CD8-positive, alpha-beta memory T cell (primary cell): ENCODE measurements at regions of chr14 and their contacts with region 1.

Region 1: GRCh38 chr14:62626416-62626815 is 418.8 kb downstream of the KCNH5 start:
- DNase-seq: no peak
- H3K4me3 ChIP-seq: no peak overlapping the region
- H3K4me3 Mint-ChIP-seq: no peak overlapping the region
- H3K27ac ChIP-seq: no peak overlapping the region
- H3K27ac Mint-ChIP-seq: no peak overlapping the region
- H3K4me1 ChIP-seq: no peaks in the 10 kb centered on the region
- H3K4me1 Mint-ChIP-seq: no peaks in the 10 kb centered on the region
- H3K27me3 ChIP-seq: no peaks in the 10 kb centered on the region
- H3K27me3 Mint-ChIP-seq: no peaks in the 10 kb centered on the region

Region 2: DNA sequence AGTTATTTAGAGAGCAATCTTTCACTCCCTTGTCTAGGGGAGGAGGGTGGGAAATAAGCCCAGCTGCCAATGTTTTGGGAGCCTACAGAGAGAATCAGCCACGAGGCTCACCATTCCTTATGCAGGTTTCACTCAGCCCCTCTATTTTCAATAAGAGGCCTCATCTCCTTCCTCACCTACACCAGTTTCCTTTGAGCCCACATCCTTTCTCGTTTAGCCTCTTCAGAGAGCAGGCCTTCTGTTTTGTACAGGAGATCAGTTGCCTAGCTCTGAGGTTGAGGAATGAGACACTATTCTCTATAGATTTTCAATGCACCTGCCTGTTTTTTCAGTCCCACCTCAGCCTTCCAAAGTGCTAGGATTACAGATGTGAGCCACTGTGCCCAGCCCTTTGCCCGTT is 846.3 kb before region 1 on chr14:
- CTCF ChIA-PET with region 1: no interaction called
- POLR2A ChIA-PET with region 1: interaction called, 10 read pairs
- DNase-seq: peak in 2 of 5 donors; percentile 5 to 45
- H3K4me3 ChIP-seq: no peak overlapping the region
- H3K4me3 Mint-ChIP-seq: peak overlapping the region in 4 of 7 donors; percentile 4 to 54 (median 26)
- H3K27ac ChIP-seq: no peak overlapping the region
- H3K27ac Mint-ChIP-seq: peak overlapping the region in 5 of 8 donors; percentile 32 to 88 (median 70)
- H3K4me1 ChIP-seq: peaks cover 23% of the 10 kb centered on the region
- H3K4me1 Mint-ChIP-seq: peaks cover 15 to 20% (median 19%) of the 10 kb centered on the region in 3 donors
- H3K27me3 ChIP-seq: no peaks in the 10 kb centered on the region
- H3K27me3 Mint-ChIP-seq: peaks cover 0 to 2% of the 10 kb centered on the region in 2 donors